ENCODE measurements at regions of chr4 and their contacts with region 1.

Region 1: DNA sequence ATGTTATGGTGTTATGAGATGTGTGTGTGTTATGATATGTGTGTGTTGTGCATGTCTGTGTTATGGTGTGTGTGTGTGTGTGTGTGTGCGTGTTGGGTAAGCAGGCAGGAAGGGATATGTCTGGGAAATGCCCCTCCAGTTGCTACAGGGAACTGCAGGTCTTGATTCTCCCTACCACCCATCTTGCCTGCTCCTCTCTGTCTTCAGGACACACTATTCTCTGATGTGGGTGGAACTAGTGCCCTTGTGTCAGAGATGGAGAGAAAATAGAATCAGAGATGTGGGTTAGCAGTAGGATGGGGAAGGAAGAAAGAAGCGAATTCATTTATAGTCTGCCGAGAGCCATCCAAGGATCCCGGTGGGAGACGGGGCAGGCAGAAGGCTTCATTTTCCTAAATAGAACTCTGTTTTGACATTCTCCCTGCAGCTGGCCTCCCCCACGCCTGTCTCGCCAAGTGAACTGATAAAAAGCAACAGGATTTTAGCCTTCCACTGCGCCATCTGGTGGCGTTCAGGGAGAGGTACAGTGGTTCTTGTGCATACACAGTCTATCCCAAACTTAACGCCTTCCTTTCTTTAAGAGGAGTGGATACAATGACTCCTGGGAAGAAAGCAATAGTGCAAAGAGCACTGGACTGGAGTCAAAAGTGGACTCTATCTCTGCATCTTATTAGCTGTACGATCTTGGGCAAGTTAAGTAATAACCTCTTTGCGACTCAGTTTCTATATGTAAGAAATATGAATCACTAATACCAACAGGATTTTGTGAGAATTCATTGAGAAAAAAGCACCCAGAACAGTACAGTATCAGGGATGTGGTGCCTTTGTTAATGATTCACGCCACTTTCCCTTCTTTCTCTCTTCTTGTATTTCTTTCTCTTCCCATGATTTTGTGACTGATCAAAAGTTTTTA is 14.1 kb upstream of the MGST2 start:
- DNase-seq: no peak
- H3K4me3 ChIP-seq: no peak overlapping the region
- CTCF ChIP-seq: peak; percentile 90

Region 2: DNA sequence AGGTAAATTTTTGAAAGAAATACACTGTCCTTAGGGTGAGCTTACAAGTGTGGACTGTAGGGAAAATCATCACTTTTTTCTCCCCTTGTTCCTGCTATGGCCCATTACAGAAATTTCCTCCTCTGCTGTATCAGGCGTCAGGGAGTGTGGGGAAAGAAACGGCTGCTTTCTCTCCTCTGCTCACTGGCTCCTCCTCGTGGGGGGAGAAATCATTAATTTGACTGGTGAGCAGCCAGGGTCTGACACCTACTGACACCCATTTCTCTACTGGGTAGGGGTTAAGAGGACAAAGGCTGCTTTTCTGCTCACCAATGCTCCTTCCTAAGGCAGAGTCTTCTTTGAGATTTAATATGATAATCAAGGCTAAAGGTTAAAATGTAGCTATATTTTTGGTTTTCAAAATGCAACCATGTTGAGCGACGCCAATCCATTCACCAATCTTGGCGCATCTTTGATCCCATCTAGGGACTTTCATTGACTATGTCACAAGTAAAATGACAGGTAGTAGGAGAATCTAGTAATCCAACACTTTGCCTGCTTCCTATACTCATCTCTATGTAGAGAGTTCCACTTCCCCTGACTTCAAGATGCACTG is 120.6 kb before region 1 on chr4:
- CTCF ChIA-PET with region 1: no interaction called
- POLR2A ChIA-PET with region 1: no interaction called
- DNase-seq: no peak
- H3K4me3 ChIP-seq: no peak overlapping the region
- CTCF ChIP-seq: peak; percentile 54

Region 3: DNA sequence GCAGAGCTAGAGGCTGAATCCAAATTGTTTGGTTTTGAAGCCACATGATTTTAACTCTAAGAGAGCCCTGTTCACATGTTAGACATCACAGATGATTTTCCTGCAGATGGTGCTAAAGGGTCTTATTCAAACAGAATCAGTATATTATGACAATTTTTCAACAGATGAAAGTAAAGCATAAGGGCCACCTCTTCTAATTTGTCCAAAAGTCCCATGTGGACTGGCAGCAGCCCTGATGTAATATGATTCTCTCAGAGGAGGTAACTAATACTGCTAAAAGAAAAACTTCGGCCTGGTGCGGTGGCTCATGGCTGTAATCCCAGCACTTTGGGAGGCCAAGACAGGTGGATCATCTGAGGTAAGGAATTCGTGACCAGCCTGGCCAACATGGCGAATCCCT is 69.5 kb before region 1 on chr4:
- CTCF ChIA-PET with region 1: interaction called, 51 read pairs
- POLR2A ChIA-PET with region 1: no interaction called
- DNase-seq: no peak
- H3K4me3 ChIP-seq: no peak overlapping the region
- CTCF ChIP-seq: peak; percentile 3

Region 4: GRCh38 chr4:139619644-139620043 is 31.9 kb before region 1 on chr4:
- CTCF ChIA-PET with region 1: interaction called, 116 read pairs
- POLR2A ChIA-PET with region 1: no interaction called
- DNase-seq: no peak
- H3K4me3 ChIP-seq: no peak overlapping the region
- CTCF ChIP-seq: peak; percentile 55

Region 5: DNA sequence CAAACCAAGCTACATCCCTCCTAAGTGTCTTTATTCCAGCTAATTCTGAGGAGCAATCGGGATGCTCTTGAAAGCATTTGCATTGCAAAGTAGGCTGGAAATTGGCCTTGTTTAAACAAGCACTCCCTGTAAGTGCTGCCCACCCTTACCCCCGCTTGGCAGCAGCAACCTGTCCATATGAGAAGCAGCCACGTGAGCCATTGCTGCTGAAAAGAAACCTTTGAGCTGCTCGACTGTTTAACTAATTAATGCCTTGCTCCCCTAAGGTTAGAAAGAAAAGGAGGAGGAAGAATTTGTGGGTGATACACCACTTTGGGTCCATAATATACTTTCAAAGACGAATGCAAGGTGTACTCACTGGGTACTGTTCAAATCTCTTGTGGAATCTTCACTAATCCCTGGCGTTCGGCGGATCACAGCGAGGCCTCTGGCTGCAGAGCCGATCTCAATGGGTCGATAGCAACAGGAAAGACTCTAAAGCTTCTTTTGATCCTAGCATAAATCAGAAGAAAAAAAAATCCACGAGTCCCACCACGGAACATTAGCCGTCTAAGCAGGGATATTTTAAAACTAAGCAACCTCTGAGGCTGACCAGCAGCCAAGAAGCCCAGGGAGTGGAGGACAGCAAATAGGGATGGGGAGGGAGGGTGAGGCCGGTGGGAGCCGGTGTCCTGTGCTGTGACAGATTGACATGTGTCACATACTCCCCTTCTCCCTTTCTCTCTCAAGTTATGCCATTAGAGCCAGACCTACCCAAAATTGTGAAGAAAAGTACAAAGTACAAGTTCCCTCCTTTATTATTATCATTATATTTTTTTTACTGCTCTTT is 23.1 kb before region 1 on chr4:
- CTCF ChIA-PET with region 1: interaction called, 116 read pairs
- POLR2A ChIA-PET with region 1: no interaction called
- DNase-seq: no peak
- H3K4me3 ChIP-seq: no peak overlapping the region
- CTCF ChIP-seq: no peak

Region 6: GRCh38 chr4:139665690-139666529 is 14.4 kb after region 1 on chr4 and contains the start of gene MGST2:
- CTCF ChIA-PET with region 1: interaction called, 61 read pairs
- POLR2A ChIA-PET with region 1: no interaction called
- DNase-seq: no peak
- H3K4me3 ChIP-seq: peak within 1 kb of the TSS; percentile 47
- CTCF ChIP-seq: no peak